CD4-positive, alpha-beta memory T cell (primary cell): ENCODE measurements at regions of chr1 and their contacts with region 1.

Region 1: GRCh38 chr1:161766102-161766981 is at the start of gene ATF6:
- DNase-seq: peak; percentile 77 to 85 (median 82)
- H3K4me3 ChIP-seq: peak within 1 kb of the TSS; percentile 89 to 90
- H3K4me3 Mint-ChIP-seq: peak within 1 kb of the TSS; percentile 95 to 100 (median 99)
- H3K27ac ChIP-seq: peak within 1 kb of the TSS; percentile 88
- H3K27ac Mint-ChIP-seq: peak within 1 kb of the TSS; percentile 97 to 99 (median 98)
- H3K4me1 ChIP-seq: peaks cover 58% of the 10 kb centered on the region
- H3K4me1 Mint-ChIP-seq: peaks cover 29 to 50% (median 41%) of the 10 kb centered on the region in 4 donors
- H3K27me3 ChIP-seq: no peaks in the 10 kb centered on the region
- H3K27me3 Mint-ChIP-seq: no peaks in the 10 kb centered on the region
- total RNA-seq, gene ATF6: 22.3 to 22.4 TPM

Region 2: DNA sequence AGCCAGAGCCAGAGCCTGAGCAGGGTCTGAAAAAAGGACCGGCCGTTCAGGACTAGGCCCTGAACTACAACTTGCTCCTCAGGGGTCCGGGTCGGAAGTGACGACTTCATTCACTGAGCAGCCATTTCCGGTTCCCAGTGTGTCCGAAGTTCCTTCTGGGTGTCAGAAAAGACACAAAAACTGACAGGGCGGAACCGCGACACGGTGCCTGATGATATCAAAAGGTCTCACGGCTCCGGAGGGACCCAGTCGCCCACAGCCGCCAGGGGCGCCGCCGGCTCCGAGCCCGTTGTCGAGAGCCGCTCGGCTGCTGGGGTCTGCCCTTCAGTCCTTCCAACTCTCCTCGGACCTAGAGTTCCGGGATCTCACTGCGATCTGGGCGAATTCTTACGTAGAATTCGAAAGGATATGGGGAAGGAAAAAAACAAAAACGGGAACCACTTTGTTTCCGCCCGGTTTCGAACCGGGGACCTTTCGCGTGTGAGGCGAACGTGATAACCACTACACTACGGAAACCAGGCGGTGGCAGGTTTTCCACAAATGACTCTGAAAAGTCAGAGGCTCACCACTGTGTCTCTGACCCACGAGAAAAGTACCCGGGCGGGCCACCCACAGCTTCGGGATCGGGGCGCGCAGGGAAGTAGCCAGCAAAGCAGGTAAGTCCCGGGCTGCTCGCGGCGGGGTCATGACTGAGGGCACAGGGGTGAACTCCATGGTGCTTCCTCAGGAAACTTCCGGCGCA is 366.9 kb before region 1 on chr1:
- CTCF ChIA-PET with region 1: no interaction called
- POLR2A ChIA-PET with region 1: no interaction called
- intact Hi-C with region 1: loop called (anchors 10 kb)
- DNase-seq: peak; percentile 92 to 95 (median 93)
- H3K4me3 ChIP-seq: peak overlapping the region; percentile 49 to 65
- H3K4me3 Mint-ChIP-seq: peak overlapping the region; percentile 94 to 100 (median 97)
- H3K27ac ChIP-seq: peak overlapping the region; percentile 97
- H3K27ac Mint-ChIP-seq: peak overlapping the region; percentile 98 to 100 (median 100)
- H3K4me1 ChIP-seq: peaks cover 23% of the 10 kb centered on the region
- H3K4me1 Mint-ChIP-seq: peaks cover 16 to 42% (median 27%) of the 10 kb centered on the region in 4 donors
- H3K27me3 ChIP-seq: no peaks in the 10 kb centered on the region
- H3K27me3 Mint-ChIP-seq: peaks cover 1 to 8% of the 10 kb centered on the region in 2 donors

Region 3: GRCh38 chr1:161726596-161727457 is 39.5 kb before region 1 on chr1:
- CTCF ChIA-PET with region 1: interaction called, 5 read pairs
- POLR2A ChIA-PET with region 1: interaction called, 5 read pairs
- intact Hi-C with region 1: loop called (anchors 2 kb)
- DNase-seq: peak; percentile 66 to 77 (median 68)
- H3K4me3 ChIP-seq: peak overlapping the region; percentile 79 to 85
- H3K4me3 Mint-ChIP-seq: peak overlapping the region; percentile 92 to 100 (median 96)
- H3K27ac ChIP-seq: peak overlapping the region; percentile 61
- H3K27ac Mint-ChIP-seq: peak overlapping the region; percentile 34 to 97 (median 90)
- H3K4me1 ChIP-seq: peaks cover 38% of the 10 kb centered on the region
- H3K4me1 Mint-ChIP-seq: peaks cover 24 to 53% (median 39%) of the 10 kb centered on the region in 4 donors
- H3K27me3 ChIP-seq: no peaks in the 10 kb centered on the region
- H3K27me3 Mint-ChIP-seq: no peaks in the 10 kb centered on the region

Region 4: DNA sequence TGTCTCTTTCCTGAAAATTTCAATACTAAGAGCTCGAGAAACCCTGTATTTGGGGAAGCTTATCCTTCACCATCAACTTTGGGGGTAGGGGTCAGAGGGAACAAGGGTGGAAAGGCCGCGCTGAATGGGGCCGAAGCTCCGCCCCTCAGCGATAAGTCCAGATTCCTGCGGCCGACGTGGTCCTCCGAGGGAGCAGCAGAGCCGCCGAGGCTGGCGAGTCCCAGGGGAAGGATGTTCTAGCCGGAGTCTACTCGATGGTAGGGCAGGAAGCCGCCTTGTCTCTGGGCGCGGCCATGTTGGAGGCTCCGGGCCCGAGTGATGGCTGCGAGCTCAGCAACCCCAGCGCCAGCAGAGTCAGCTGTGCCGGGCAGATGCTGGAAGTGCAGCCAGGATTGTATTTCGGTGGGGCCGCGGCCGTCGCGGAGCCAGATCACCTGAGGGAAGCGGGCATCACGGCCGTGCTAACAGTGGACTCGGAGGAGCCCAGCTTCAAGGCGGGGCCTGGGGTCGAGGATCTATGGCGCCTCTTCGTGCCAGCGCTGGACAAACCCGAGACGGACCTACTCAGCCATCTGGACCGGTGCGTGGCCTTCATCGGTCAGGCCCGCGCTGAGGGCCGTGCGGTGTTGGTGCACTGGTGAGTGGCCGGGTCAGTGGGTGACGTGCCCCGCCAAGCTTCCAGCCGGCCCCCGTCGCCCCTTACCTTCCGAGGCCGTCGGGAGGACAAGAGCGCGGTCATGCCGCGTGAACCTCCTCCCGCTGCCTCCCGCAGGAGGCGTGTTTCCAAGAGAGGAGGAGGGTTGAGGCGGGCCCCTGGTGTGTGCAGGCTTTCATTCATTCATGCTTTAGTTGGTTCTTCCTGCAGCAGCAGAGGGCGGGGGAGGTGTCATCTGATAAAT is 16.6 kb before region 1 on chr1 and contains the start of gene DUSP12:
- CTCF ChIA-PET with region 1: interaction called, 12 read pairs
- POLR2A ChIA-PET with region 1: interaction called, 13 read pairs
- intact Hi-C with region 1: no loop called
- DNase-seq: peak; percentile 84 to 90 (median 86)
- H3K4me3 ChIP-seq: peak within 1 kb of the TSS; percentile 91 to 96
- H3K4me3 Mint-ChIP-seq: peak within 1 kb of the TSS; percentile 99 to 100 (median 99)
- H3K27ac ChIP-seq: peak within 1 kb of the TSS; percentile 75
- H3K27ac Mint-ChIP-seq: peak within 1 kb of the TSS; percentile 95 to 98 (median 96)
- H3K4me1 ChIP-seq: peaks cover 19% of the 10 kb centered on the region
- H3K4me1 Mint-ChIP-seq: peaks cover 18 to 35% (median 27%) of the 10 kb centered on the region in 4 donors
- H3K27me3 ChIP-seq: no peaks in the 10 kb centered on the region
- H3K27me3 Mint-ChIP-seq: peaks cover 1 to 6% of the 10 kb centered on the region in 2 donors
- total RNA-seq, gene DUSP12: 30.4 to 31.6 TPM

Region 5: GRCh38 chr1:161849518-161849917 is 83.2 kb after region 1 on chr1:
- CTCF ChIA-PET with region 1: no interaction called
- POLR2A ChIA-PET with region 1: no interaction called
- intact Hi-C with region 1: no loop called
- DNase-seq: no peak
- H3K4me3 ChIP-seq: no peak overlapping the region
- H3K4me3 Mint-ChIP-seq: no peak overlapping the region
- H3K27ac ChIP-seq: no peak overlapping the region
- H3K27ac Mint-ChIP-seq: no peak overlapping the region
- H3K4me1 ChIP-seq: no peaks in the 10 kb centered on the region
- H3K4me1 Mint-ChIP-seq: peaks cover 0 to 2% (median 0%) of the 10 kb centered on the region in 4 donors
- H3K27me3 ChIP-seq: no peaks in the 10 kb centered on the region
- H3K27me3 Mint-ChIP-seq: no peaks in the 10 kb centered on the region

Region 6: DNA sequence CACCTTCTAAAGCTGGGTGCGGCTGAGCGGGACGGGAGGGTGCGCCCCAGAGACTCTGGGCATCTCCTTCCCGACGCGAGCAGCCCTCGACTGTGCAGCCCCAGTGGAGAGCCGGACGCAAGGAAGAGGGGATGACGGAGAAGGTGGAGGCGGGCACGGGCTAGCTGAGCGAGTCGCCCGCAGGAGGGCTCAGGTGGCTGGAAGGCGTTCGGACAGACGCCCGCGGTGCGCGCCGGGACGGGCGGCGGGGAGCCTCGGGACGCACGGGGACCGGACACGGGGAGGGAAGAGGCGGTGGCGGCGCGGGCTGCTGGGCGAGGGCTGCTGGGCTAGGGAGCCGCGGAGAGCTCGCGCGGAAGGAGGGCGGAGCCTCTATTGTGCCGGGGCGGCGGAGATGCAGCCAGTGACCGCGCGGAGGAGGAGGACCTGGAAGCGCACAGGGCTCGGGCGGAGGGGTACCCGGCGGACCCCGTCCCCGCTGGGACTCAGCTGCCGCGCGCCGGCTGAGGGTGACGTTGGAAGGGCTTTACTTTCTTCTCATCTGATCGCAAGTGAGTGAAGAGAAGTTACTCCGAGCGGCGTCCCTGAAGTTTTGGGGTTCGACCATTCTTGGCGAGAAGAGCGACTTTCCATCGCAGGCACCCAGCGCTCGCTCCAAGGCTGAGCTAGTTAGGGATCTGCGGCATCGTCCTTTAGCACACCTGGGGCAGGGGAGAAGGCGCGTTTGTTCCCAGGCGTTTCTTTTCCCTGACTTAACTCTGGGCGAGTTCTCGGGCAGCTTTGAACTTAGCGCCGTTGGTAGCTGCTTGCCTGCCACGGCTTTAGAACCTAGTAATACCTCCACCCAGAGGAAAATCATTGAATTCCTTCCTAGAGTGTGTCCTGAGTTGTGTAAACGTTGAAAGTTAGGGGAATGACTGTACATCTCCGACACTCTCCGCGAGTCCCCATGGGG is 257.5 kb after region 1 on chr1 and contains the start of gene OLFML2B:
- CTCF ChIA-PET with region 1: no interaction called
- POLR2A ChIA-PET with region 1: no interaction called
- intact Hi-C with region 1: loop called (anchors 5 kb)
- DNase-seq: peak in 4 of 5 donors; percentile 30 to 33 (median 31)
- H3K4me3 ChIP-seq: peak within 1 kb of the TSS; percentile 49 to 63
- H3K4me3 Mint-ChIP-seq: peak within 1 kb of the TSS; percentile 86 to 95 (median 88)
- H3K27ac ChIP-seq: no peak within 1 kb of the TSS
- H3K27ac Mint-ChIP-seq: peak within 1 kb of the TSS in 2 of 7 donors; percentile 30 to 70
- H3K4me1 ChIP-seq: peaks cover 5% of the 10 kb centered on the region
- H3K4me1 Mint-ChIP-seq: peaks cover 3 to 13% (median 7%) of the 10 kb centered on the region in 4 donors
- H3K27me3 ChIP-seq: peaks cover 6% of the 10 kb centered on the region
- H3K27me3 Mint-ChIP-seq: peaks cover 17 to 40% of the 10 kb centered on the region in 2 donors
- total RNA-seq, gene OLFML2B: 0.36 to 0.58 TPM

Region 7: DNA sequence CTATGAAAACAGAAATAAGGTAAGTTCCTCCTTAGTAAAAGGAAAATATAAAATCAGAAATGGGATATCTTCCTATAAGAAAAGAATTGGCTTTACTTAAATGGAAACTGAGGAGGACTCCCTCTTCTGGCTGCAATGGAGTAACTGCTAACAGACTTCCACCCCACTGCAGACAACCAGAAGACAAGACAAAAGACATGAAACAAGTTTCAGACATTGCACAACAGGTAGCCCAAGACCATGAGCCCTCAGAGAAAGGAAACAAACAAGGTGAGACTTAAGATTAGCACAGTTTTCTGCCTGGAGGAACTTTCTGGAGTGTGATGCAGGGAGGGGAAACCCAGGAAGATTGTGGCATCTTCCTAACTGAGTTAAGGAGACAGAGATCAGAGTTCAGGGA is 274.3 kb after region 1 on chr1:
- CTCF ChIA-PET with region 1: interaction called, 63 read pairs
- POLR2A ChIA-PET with region 1: no interaction called
- intact Hi-C with region 1: loop called (anchors 1 kb)
- DNase-seq: no peak
- H3K4me3 ChIP-seq: no peak overlapping the region
- H3K4me3 Mint-ChIP-seq: no peak overlapping the region
- H3K27ac ChIP-seq: no peak overlapping the region
- H3K27ac Mint-ChIP-seq: no peak overlapping the region
- H3K4me1 ChIP-seq: no peaks in the 10 kb centered on the region
- H3K4me1 Mint-ChIP-seq: peaks cover 0 to 3% (median 3%) of the 10 kb centered on the region in 4 donors
- H3K27me3 ChIP-seq: peaks cover 11% of the 10 kb centered on the region
- H3K27me3 Mint-ChIP-seq: peaks cover 9 to 29% of the 10 kb centered on the region in 2 donors